Activated CD4-positive, alpha-beta memory T cell treated with anti-CD3 and anti-CD28 coated beads for 36 hours (primary cell): ENCODE measurements at regions of chr10 and their contacts with region 1.

Region 1: GRCh38 chr10:96831867-96832720 is at the start of gene LCOR:
- DNase-seq: peak; percentile 87
- H3K4me3 Mint-ChIP-seq: peak within 1 kb of the TSS; percentile 88
- H3K27ac Mint-ChIP-seq: peak within 1 kb of the TSS; percentile 97
- H3K4me1 Mint-ChIP-seq: peaks cover 48% of the 10 kb centered on the region
- H3K27me3 Mint-ChIP-seq: no peaks in the 10 kb centered on the region
- total RNA-seq, gene LCOR: 15.0 to 18.2 TPM

Region 2: DNA sequence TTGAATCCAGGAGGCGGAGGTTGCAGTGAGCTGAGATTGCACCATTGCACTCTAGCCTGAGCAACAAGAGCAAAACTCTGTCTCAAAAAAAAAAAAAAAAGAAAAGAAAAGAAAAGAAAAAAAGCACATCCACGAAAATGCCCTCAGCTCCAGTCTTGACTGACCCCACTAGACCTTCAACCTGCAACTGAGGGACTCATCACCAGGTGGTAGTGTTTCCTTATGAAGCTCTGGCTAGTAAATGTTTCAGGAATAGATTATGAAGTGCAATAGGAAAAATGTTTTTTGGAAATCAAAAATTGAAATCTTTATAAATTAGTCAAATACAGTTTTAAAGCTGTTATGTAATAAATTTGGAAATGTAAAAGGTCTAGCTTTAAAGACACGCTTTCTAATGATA is 340.8 kb before region 1 on chr10:
- CTCF ChIA-PET with region 1: interaction called, 3 read pairs
- POLR2A ChIA-PET with region 1: no interaction called
- intact Hi-C with region 1: loop called (anchors 1 kb)
- DNase-seq: no peak
- H3K4me3 Mint-ChIP-seq: no peak overlapping the region
- H3K27ac Mint-ChIP-seq: no peak overlapping the region
- H3K4me1 Mint-ChIP-seq: no peaks in the 10 kb centered on the region
- H3K27me3 Mint-ChIP-seq: peaks cover 9% of the 10 kb centered on the region

Region 3: GRCh38 chr10:96765406-96766240 is 66.5 kb before region 1 on chr10:
- CTCF ChIA-PET with region 1: interaction called, 5 read pairs
- POLR2A ChIA-PET with region 1: no interaction called
- intact Hi-C with region 1: loop called (anchors 1 kb)
- DNase-seq: peak; percentile 83
- H3K4me3 Mint-ChIP-seq: peak overlapping the region; percentile 3
- H3K27ac Mint-ChIP-seq: no peak overlapping the region
- H3K4me1 Mint-ChIP-seq: no peaks in the 10 kb centered on the region
- H3K27me3 Mint-ChIP-seq: no peaks in the 10 kb centered on the region

Region 4: GRCh38 chr10:96820765-96821164 is 11.3 kb before region 1 on chr10:
- CTCF ChIA-PET with region 1: no interaction called
- POLR2A ChIA-PET with region 1: no interaction called
- intact Hi-C with region 1: no loop called
- DNase-seq: no peak
- H3K4me3 Mint-ChIP-seq: no peak overlapping the region
- H3K27ac Mint-ChIP-seq: no peak overlapping the region
- H3K4me1 Mint-ChIP-seq: no peaks in the 10 kb centered on the region
- H3K27me3 Mint-ChIP-seq: no peaks in the 10 kb centered on the region

Region 5: DNA sequence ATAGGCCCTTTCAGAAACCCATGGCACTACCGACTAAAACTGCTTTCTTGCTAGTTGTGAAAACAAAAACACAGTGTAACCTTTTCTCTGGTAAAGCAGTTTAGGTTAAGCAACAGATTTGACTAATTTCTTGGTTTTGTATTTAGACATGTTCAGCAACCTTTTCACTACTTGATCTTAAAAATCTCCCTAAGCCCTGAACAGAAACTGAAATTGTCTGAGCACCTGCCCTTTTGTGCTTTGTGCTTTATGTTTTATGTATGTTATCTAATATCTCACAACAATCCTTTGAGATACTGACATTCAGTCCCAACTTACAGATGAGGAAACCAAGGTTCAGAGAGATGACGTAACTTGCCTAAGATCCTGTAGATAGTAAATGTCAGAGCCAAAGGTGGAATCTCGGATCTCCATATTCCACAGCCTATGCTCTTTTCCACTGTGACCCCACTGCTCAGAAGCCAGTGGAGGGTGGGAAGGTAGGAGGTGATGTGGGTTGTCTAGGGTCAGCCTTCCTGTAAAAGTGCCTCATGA is 146.6 kb after region 1 on chr10:
- CTCF ChIA-PET with region 1: no interaction called
- POLR2A ChIA-PET with region 1: no interaction called
- intact Hi-C with region 1: loop called (anchors 2 kb)
- DNase-seq: no peak
- H3K4me3 Mint-ChIP-seq: peak overlapping the region; percentile 6
- H3K27ac Mint-ChIP-seq: peak overlapping the region; percentile 77
- H3K4me1 Mint-ChIP-seq: peaks cover 24% of the 10 kb centered on the region
- H3K27me3 Mint-ChIP-seq: no peaks in the 10 kb centered on the region

Region 6: GRCh38 chr10:97425964-97426775 is 594.1 kb after region 1 on chr10 and contains the start of gene PGAM1:
- CTCF ChIA-PET with region 1: no interaction called
- POLR2A ChIA-PET with region 1: no interaction called
- intact Hi-C with region 1: loop called (anchors 10 kb)
- DNase-seq: peak; percentile 97
- H3K4me3 Mint-ChIP-seq: peak within 1 kb of the TSS; percentile 93
- H3K27ac Mint-ChIP-seq: peak within 1 kb of the TSS; percentile 98
- H3K4me1 Mint-ChIP-seq: peaks cover 47% of the 10 kb centered on the region
- H3K27me3 Mint-ChIP-seq: peaks cover 2% of the 10 kb centered on the region
- total RNA-seq, gene PGAM1: 1,430 to 1,457 TPM